Head of caudate nucleus (tissue), 42 donors: ENCODE measurements at regions of chr20 and their contacts with region 1.

Region 1: DNA sequence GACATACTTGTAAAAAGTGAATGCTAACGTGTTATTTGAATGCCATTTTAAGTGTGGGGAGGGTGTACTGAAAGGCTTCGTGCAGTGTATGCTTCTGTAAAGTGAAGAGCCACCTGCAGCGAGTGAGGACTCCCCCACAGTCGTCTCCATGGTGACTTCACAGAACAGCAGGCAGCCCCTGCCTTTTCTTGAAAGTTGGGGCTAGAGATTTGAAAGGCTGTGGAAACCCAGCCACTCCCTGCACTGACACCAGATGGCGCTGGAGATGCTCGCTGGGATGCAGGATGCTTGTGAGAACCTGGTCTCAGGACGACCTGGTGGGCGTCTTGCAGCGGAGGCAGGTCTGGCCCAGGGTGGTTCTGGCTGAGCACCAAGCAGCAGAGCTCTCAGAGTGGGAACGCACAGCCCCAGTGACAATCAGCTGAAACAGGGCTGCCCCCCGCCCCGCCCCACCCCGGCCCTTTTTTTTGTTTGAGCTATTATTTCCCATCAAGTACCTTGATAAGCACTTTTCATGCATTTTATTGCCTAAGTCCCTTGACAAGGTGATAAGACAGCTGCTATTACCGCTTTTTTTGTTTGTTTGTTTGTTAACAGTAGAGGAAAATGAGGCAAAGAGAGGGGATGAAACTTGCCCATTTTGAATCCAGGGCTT is 150.3 kb downstream of the SYCP2 start:
- DNase-seq: peak; percentile 66 to 92 (median 84)

Region 2: GRCh38 chr20:59428051-59428830 is 354.9 kb before region 1 on chr20:
- intact Hi-C with region 1: no loop called
- DNase-seq: no peak

Region 3: GRCh38 chr20:59605165-59606042 is 177.7 kb before region 1 on chr20:
- intact Hi-C with region 1: no loop called
- DNase-seq: peak in 33 of 42 donors; percentile 34 to 80 (median 59)

Region 4: DNA sequence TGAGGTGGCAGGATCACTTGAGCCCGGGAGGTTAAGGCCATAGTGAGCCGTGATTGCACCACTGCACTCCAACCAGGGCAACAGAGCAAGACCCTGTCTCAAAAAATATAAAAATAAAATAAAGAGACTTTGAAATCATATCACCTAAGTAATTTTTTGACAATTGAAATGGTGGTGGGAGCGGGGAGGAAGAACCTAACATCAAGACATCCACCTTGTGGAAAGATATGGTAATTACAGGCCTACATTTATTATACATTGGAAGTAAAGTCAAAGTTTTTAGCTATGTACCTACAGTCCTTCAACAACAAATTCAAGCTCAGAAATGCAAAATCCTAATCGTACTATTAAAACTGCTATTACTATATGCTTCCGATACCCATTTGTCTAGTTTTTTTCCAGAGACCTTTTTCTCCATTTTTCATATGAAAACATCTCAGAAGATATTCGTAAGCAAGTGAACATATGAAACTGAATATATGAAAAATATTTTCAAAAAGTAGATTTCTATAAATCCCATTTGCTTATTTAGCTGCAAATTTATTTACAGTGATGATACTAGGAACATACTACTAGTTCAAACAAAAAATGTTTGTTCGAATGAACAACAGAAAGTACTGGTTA is 67.0 kb after region 1 on chr20:
- intact Hi-C with region 1: loop called (anchors 5 kb)
- DNase-seq: no peak

Region 5: GRCh38 chr20:59933849-59934596 is 150.9 kb after region 1 on chr20:
- intact Hi-C with region 1: loop called (anchors 10 kb)
- DNase-seq: peak; percentile 52 to 93 (median 84)